Activated CD4-positive, alpha-beta memory T cell treated with anti-CD3 and anti-CD28 coated beads, Interleukin-2, amount 10 ng/mL, durations not matched to agents 7 days and 5 days (primary cell): ENCODE measurements at regions of chr13 and their contacts with region 1.

Region 1: DNA sequence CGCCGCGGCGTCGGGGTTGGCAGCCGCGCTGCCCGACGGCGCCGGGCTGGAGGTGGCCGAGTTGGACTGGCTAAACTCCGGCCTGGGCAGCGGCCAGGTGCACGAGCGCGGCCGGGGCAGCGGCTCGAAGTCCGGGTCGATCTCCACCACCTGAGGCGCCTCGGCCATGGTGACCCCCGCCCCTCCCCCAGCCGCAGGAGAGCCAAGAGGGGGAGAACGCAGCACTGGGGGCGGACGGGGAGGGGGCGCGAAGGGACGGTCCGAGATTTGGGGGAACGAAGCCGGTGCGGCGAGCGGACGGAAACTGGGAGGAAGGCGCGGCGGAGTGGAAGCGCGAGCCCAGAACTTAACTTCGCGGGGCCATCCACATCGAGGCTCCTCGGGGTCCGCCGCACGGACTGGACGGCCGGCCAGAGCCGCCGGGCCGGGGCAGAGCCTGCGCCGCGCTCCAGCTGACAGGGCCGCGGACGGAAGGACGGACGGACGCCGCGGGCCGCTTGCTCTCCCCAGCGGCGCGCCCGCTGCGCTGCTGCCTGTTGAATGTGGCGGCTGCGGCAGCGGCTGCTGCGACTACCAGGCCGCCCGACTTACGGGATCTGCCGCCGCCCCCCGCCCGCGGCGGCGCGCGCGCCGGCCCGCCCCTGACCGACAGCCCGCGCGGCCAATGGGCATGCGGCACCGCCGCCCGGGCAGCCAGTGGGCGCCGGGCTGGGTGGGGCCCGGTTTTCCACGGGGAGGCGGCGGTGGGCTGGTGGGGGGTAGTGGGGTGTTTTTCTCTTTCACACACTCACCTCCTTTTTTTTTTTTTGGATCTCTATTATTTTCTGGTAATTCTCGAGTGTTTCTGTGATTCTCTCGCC is at the start of gene FOXO1:
- DNase-seq: peak; percentile 92
- H3K4me3 Mint-ChIP-seq: peak within 1 kb of the TSS; percentile 92
- H3K27ac Mint-ChIP-seq: peak within 1 kb of the TSS; percentile 90
- H3K4me1 Mint-ChIP-seq: peaks cover 39% of the 10 kb centered on the region
- H3K27me3 Mint-ChIP-seq: no peaks in the 10 kb centered on the region
- total RNA-seq, gene FOXO1: 31.6 to 32.2 TPM

Region 2: DNA sequence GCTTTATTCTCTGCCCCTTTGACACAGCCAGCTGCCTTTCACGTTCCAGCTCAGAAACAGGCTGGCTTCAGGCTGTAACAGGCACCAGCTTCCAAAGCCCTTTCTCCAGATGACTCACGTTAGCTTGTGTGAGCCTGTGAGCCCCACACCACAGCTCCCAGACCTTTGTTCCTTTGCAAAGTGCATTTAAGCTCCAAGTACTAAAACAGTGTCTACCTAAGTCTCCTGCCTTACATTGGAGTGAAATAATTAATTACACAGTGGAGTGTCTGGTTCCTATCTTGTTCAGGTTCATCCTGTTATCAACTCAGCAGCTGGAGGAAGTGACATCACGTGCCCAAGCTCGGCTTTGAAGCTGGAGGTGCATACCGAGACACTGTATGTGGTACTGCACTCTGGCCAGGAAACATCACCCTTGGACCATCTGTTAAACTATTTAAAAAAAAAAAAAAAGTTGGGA is 475.6 kb before region 1 on chr13:
- CTCF ChIA-PET with region 1: interaction called, 3 read pairs
- POLR2A ChIA-PET with region 1: interaction called, 28 read pairs
- DNase-seq: peak; percentile 77
- H3K4me3 Mint-ChIP-seq: peak overlapping the region; percentile 31
- H3K27ac Mint-ChIP-seq: peak overlapping the region; percentile 96
- H3K4me1 Mint-ChIP-seq: peaks cover 60% of the 10 kb centered on the region
- H3K27me3 Mint-ChIP-seq: no peaks in the 10 kb centered on the region

Region 3: DNA sequence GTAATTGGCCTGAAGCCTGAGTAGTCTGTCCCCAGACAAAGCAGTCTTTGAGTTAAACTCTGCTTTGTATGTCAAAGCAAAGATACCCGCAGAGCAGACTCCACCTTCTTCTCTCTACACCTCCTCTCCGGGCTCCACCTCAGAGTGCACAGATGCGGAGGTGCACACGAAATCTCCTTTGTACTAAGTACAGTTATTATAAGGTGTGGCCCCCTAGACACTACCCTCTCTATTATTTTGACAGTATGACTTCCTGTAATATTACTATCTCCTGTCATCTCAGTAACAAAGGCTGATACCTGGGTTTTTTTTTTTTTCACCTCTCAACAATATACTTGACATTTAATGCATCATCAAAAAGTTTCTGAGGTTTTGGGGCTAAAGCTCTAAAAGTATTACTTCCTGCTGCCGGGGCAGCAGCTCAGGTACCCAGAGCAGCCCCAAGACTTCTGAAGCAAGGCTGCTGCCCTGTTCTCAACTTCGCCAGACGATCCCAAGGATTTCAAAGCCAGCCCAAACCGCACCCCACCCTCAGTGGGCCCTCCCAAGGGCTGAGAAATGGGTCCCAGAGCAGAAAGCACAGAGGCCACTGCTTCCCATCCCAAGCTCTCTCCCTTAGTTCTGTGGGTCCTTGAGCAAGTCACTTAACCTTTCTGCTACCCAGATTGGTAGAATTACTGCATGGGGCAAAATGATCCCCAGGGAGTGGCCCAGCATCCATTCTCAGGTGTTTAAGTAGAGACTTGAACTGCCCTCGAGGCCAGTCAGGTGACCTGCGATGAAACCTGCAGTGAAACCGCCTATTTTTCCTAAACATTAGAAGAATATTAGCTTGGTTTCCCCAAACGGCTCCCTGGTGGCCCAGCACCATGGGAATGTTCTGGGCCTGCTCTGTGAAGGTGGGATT is 180.4 kb before region 1 on chr13:
- CTCF ChIA-PET with region 1: interaction called, 7 read pairs
- POLR2A ChIA-PET with region 1: interaction called, 74 read pairs
- DNase-seq: peak; percentile 69
- H3K4me3 Mint-ChIP-seq: peak overlapping the region; percentile 9
- H3K27ac Mint-ChIP-seq: peak overlapping the region; percentile 94
- H3K4me1 Mint-ChIP-seq: peaks cover 59% of the 10 kb centered on the region
- H3K27me3 Mint-ChIP-seq: no peaks in the 10 kb centered on the region

Region 4: GRCh38 chr13:40613192-40613818 is 53.0 kb before region 1 on chr13:
- CTCF ChIA-PET with region 1: interaction called, 11 read pairs
- POLR2A ChIA-PET with region 1: interaction called, 140 read pairs
- DNase-seq: peak; percentile 77
- H3K4me3 Mint-ChIP-seq: peak overlapping the region; percentile 76
- H3K27ac Mint-ChIP-seq: peak overlapping the region; percentile 99
- H3K4me1 Mint-ChIP-seq: peaks cover 87% of the 10 kb centered on the region
- H3K27me3 Mint-ChIP-seq: no peaks in the 10 kb centered on the region

Region 5: GRCh38 chr13:40639221-40639681 is 27.0 kb before region 1 on chr13:
- CTCF ChIA-PET with region 1: interaction called, 4 read pairs
- POLR2A ChIA-PET with region 1: interaction called, 101 read pairs
- DNase-seq: no peak
- H3K4me3 Mint-ChIP-seq: no peak overlapping the region
- H3K27ac Mint-ChIP-seq: no peak overlapping the region
- H3K4me1 Mint-ChIP-seq: peaks cover 78% of the 10 kb centered on the region
- H3K27me3 Mint-ChIP-seq: no peaks in the 10 kb centered on the region

Region 6: DNA sequence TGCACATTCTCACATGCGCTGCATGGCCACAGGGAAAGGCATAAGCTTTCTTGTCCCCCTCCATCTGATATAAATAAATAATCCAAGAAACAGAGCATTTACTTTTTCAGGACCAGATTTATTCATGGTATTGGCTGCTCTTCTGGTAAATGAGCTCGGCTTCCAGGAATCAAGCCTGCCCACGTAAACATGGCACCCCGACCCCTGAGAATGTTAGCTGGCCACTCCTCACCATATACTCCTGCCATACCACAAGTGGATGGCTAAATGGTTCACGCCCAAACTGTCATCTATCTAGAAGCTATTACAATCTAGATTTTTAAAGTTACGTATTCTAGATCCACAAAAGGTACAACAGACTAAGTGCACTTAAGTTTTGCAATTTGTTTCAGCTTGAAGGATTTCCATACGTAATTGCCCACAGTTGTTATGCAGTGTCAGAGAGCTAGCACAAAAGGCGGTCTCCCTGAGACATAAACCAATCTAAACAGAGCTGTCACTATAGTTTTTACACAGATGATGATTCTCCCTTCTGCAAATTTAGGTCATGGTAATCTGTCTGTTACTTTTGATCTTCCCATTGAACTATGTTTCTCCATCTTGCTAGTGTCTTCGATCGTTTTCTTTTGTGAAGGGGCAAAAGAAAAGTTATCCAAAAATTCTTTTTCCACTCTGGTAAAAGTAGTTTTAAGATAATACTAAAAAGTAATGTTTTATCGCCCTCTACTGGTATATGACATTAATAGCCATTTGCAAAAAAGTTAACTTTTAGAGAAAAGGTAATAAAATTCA is 16.4 kb after region 1 on chr13:
- CTCF ChIA-PET with region 1: interaction called, 13 read pairs
- POLR2A ChIA-PET with region 1: interaction called, 6 read pairs
- DNase-seq: no peak
- H3K4me3 Mint-ChIP-seq: no peak overlapping the region
- H3K27ac Mint-ChIP-seq: no peak overlapping the region
- H3K4me1 Mint-ChIP-seq: peaks cover 6% of the 10 kb centered on the region
- H3K27me3 Mint-ChIP-seq: no peaks in the 10 kb centered on the region